HepG2 (cell line): ENCODE measurements at regions of chr4 and their contacts with region 1.

Region 1: GRCh38 chr4:47836641-47837093 is 1.2 kb downstream of the CORIN start:
- DNase-seq: peak; percentile 76
- ATAC-seq: peak; percentile 95
- H3K4me3 ChIP-seq: peak overlapping the region; percentile 58 to 76 (median 65)
- H3K27ac ChIP-seq: no peak overlapping the region
- H3K4me1 ChIP-seq: peaks cover 22% of the 10 kb centered on the region
- H3K27me3 ChIP-seq: no peaks in the 10 kb centered on the region
- CTCF ChIP-seq: peak; percentile 94
- EP300 ChIP-seq: no peak
- POLR2A ChIP-seq: no peak
- RAD21 ChIP-seq: peak; percentile 93

Region 2: DNA sequence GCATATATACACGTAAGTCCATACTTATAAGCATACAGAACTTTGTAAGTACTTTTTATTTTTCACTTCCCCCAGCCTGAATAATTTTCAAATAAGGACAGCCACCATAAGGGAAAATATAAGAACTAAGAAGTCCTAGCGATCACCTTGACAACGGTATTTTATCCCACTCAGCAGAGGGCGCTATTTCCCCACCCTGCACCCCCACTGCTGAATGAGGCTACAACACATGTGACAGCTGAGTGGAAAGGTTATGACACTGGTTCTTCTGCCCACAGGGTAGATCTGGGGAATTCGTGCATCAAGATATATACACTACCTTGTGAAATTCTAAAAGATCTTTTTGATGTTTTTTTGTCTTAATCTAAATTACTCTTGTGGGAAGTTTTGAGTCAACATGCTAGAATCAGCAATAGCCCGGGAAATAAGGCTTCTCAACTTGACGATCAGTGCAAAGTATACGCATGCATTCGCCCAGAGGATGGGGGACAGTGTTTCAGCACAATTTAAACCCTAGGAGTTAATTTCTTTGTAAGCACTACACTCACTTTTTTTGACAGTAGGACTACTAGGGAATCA is 150.3 kb before region 1 on chr4:
- CTCF ChIA-PET with region 1: interaction called, 20 read pairs
- POLR2A ChIA-PET with region 1: no interaction called
- in situ Hi-C with region 1: no loop called
- intact Hi-C with region 1: loop called (anchors 1 kb)
- DNase-seq: peak; percentile 35
- ATAC-seq: peak; percentile 94
- H3K4me3 ChIP-seq: no peak overlapping the region
- H3K27ac ChIP-seq: no peak overlapping the region
- H3K4me1 ChIP-seq: no peaks in the 10 kb centered on the region
- H3K27me3 ChIP-seq: no peaks in the 10 kb centered on the region; a peak in 1 of 5 replicates
- CTCF ChIP-seq: peak; percentile 85
- EP300 ChIP-seq: no peak
- POLR2A ChIP-seq: no peak
- RAD21 ChIP-seq: peak; percentile 43; the same call in 1 of the 2 replicates

Region 3: DNA sequence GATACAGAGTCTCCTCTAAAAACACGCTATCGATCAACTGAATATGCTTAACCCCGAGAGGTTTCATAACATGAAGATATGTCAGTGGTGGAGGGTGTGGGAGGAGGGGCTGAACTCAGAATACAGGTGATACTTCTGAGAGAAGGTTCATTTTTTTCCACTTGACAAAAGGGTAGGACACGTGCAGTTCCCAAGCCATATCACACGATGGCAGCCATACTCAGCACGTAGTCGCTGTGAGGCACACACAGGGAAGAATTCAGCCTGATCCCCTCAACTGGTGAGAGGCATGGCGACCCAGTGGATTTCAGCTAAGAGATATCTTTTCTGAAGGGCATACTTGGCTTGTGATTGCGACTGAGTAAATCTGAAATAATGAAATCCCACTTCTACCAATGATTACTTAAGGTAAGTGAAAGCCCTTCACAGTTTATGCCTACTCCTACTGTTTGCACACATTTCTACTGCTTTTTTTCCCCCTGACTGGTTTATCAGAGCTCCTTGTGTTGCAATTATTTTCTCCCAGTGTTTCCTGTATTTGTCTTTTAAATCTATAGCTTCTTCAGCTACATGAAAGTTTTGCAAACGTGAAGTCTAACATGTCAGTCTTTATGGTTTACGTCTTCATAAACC is 131.9 kb before region 1 on chr4:
- CTCF ChIA-PET with region 1: interaction called, 39 read pairs
- POLR2A ChIA-PET with region 1: interaction called, 12 read pairs
- in situ Hi-C with region 1: loop called (anchors 5 kb)
- intact Hi-C with region 1: loop called (anchors 1 kb)
- DNase-seq: peak; percentile 58
- ATAC-seq: peak; percentile 100
- H3K4me3 ChIP-seq: peak overlapping the region in 2 of 3 experiments; percentile 13 to 20; a peak in 3 of 6 replicates
- H3K27ac ChIP-seq: no peak overlapping the region
- H3K4me1 ChIP-seq: peaks cover 23% of the 10 kb centered on the region
- H3K27me3 ChIP-seq: peaks cover 0 to 1% of the 10 kb centered on the region in 2 experiments; a peak in 1 of 5 replicates
- CTCF ChIP-seq: peak; percentile 89
- EP300 ChIP-seq: no peak
- POLR2A ChIP-seq: no peak
- RAD21 ChIP-seq: peak; percentile 72

Region 4: DNA sequence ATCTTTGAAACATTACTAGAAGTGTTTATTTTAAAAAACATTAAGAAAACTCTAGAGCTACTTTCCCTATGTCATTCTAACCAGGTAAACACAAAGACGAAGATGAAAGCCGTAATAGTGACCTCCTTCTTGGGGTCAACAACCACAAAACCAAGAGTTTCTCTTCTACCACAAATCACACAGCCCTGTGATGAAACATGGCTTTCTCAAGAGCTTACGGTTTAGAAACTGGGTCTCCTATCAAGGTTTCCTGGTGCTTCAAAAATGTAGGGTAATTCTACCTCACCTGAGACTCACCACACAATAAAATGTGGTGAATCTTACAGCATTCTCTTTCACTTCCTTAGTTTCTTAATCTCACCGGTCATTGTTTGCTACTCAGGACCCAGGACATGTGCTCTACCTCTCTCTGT is 49.7 kb before region 1 on chr4:
- CTCF ChIA-PET with region 1: no interaction called
- POLR2A ChIA-PET with region 1: no interaction called
- in situ Hi-C with region 1: no loop called
- intact Hi-C with region 1: loop called (anchors 1 kb)
- DNase-seq: peak; percentile 67
- ATAC-seq: peak; percentile 73
- H3K4me3 ChIP-seq: no peak overlapping the region
- H3K27ac ChIP-seq: peak overlapping the region; percentile 48
- H3K4me1 ChIP-seq: peaks cover 30% of the 10 kb centered on the region
- H3K27me3 ChIP-seq: no peaks in the 10 kb centered on the region; a peak in 1 of 5 replicates
- CTCF ChIP-seq: no peak
- EP300 ChIP-seq: peak in 1 of 2 experiments; percentile 83; a peak in 2 of 4 replicates
- POLR2A ChIP-seq: no peak
- RAD21 ChIP-seq: no peak

Region 5: DNA sequence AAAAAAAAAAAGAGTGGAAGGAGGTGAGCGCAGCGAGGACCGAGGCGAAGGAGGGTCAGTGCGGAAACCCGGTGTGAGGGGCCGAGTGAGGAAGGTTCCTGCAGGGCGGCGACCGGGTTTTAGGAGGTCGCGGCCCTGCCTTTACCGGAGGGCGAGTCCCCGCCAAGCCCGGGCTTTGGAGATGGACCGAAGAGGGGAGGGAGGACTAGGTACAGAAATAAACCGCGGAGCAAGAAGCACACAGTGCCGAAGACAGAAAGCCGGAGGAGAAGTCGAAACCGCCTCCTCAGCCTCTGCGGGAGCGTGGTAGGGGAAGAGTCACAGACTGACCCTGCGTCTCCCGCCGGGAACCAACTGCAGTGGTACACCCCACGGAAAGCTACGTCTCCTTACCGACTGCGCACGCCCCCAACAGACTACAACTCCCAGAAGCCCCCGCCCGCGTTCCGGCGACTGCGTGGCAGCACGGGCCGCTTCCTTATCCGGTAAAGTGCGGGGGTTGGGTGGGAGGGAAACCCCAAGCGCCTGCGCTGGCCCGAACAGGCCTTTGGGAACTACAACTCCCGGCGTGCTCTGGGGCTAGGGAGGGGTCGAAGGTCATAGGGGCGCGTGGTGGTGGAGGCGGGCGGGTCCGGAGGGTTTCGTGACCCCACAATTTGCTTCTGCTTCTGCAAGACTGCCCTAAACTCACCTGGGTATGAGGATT is 77.7 kb after region 1 on chr4 and contains the start of gene NFXL1:
- CTCF ChIA-PET with region 1: no interaction called
- POLR2A ChIA-PET with region 1: interaction called, 4 read pairs
- in situ Hi-C with region 1: no loop called
- intact Hi-C with region 1: loop called (anchors 5 kb)
- DNase-seq: peak; percentile 95
- ATAC-seq: peak; percentile 97
- H3K4me3 ChIP-seq: peak within 1 kb of the TSS; percentile 80 to 96 (median 96)
- H3K27ac ChIP-seq: peak within 1 kb of the TSS; percentile 87
- H3K4me1 ChIP-seq: peaks cover 40% of the 10 kb centered on the region
- H3K27me3 ChIP-seq: no peaks in the 10 kb centered on the region; a peak in 1 of 5 replicates
- CTCF ChIP-seq: no peak
- EP300 ChIP-seq: 0 out of 4 replicates have a peak, but pooled peaks of 1 of the 2 experiments have one; percentile 23
- POLR2A ChIP-seq: peak; percentile 97 to 98
- RAD21 ChIP-seq: no peak
- total RNA-seq, gene NFXL1: 18.6 and 22.6 TPM in 2 replicates

Region 6: GRCh38 chr4:47926639-47927258 is 90.1 kb after region 1 on chr4:
- CTCF ChIA-PET with region 1: no interaction called
- POLR2A ChIA-PET with region 1: no interaction called
- in situ Hi-C with region 1: no loop called
- intact Hi-C with region 1: loop called (anchors 2 kb)
- DNase-seq: peak; percentile 61
- ATAC-seq: peak; percentile 100
- H3K4me3 ChIP-seq: peak overlapping the region; percentile 3 to 64 (median 24); a peak in 3 of 6 replicates
- H3K27ac ChIP-seq: no peak overlapping the region
- H3K4me1 ChIP-seq: peaks cover 14% of the 10 kb centered on the region
- H3K27me3 ChIP-seq: no peaks in the 10 kb centered on the region
- CTCF ChIP-seq: peak; percentile 89
- EP300 ChIP-seq: no peak
- POLR2A ChIP-seq: no peak
- RAD21 ChIP-seq: 0 out of 2 replicates have a peak, but pooled peaks have one; percentile 11